ENCODE measurements at regions of chr7 and their contacts with region 1.

Region 1: DNA sequence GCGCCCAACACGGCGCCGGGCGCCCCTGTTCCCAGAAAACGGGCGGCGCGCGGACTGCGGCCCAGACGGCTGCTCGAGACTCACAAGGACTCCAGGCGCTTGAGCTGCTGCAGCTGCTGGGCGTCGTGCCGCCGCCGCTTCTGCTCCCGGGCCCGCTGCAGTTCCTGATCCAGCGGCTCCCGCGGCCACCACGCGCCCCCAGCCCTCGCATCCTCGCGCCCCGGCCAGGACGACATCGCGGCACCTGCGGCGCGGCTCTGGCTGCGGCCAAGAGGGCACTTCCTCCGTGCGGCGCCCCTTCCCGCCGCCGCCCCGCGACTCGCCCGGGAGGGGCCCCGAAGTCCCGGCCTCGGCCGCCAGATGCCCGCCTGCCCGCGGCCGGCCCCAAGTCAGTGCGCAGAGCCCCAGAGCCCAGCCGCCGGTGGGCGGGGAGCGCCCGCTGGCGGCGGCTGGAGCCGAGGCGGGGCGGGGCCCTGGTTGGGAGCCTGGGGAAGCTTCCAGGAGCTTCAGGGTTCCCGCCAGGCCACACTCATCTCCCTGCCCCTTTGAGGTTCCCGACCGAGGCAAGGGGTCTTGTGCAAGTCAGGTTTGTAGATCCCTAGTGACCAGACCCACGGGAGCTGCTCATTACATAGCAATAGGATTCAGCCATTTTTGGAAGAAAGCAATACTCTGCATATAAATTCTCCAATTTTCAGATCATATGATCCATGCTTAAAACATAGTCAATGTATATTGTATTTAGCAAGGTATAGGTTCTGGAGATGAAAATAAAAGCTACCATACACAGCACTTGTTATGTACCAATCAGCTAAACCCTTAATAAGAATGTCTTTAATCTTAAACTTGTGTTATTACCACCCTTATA is 14.2 kb upstream of the FKBP9 start:
- DNase-seq: peak; percentile 75 to 85
- ATAC-seq: peak; percentile 93 to 97 (median 96)
- H3K4me3 ChIP-seq: peak overlapping the region; percentile 40 to 99 (median 87)
- H3K27ac ChIP-seq: peak overlapping the region; percentile 76 to 99 (median 98)
- H3K4me1 ChIP-seq: peaks cover 0 to 43% (median 30%) of the 10 kb centered on the region in 9 donors
- H3K27me3 ChIP-seq: no peaks in the 10 kb centered on the region
- CTCF ChIP-seq: peak; percentile 59 to 87 (median 73)

Region 2: DNA sequence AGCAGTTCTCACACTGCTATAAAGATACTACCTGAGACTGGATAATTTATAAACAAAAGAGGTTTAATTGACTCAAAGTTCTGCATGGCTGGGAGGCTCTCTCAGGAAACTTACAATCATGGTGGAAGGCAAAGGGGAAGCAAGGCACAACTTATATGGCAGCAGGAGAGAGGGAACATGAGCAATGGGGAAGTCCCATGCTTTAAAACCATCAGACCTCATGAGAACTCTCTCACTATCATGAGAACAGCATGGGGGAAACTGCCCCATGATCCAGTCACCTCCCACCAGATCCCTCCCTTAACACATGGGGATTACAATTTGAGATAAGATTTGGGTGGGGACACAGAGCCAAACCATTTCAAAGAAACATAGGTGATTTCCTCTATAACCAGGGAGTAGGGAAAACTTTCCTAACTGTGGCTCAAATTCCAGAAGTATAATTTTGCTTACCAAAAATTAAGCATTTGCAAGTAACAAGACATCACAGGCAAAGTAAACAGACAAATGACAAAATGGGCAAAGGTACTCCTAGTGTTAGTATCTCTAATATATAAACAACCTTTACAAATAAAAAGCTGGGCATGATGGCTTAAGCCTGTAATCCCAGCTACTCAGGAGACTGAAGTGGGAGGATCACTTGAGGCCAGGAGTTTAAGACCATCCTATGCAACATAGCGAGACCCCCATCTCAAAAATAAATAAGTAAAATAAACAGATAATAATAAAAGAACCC is 139.4 kb before region 1 on chr7:
- intact Hi-C with region 1: loop called in 4 of 10 experiments (anchors 5 to 10 kb)
- DNase-seq: no peak
- ATAC-seq: no peak
- H3K4me3 ChIP-seq: no peak overlapping the region
- H3K27ac ChIP-seq: no peak overlapping the region
- H3K4me1 ChIP-seq: peaks cover 0 to 3% (median 0%) of the 10 kb centered on the region in 9 donors
- H3K27me3 ChIP-seq: no peaks in the 10 kb centered on the region
- CTCF ChIP-seq: no peak

Region 3: GRCh38 chr7:32846701-32847100 is 96.3 kb before region 1 on chr7:
- intact Hi-C with region 1: loop called in 5 of 10 experiments (anchors 1 to 10 kb)
- DNase-seq: peak; percentile 81 to 91
- ATAC-seq: peak; percentile 96 to 100 (median 98)
- H3K4me3 ChIP-seq: peak overlapping the region in 4 of 10 donors; percentile 3 to 16 (median 10)
- H3K27ac ChIP-seq: no peak overlapping the region
- H3K4me1 ChIP-seq: peaks cover 0 to 10% (median 3%) of the 10 kb centered on the region in 9 donors
- H3K27me3 ChIP-seq: no peaks in the 10 kb centered on the region
- CTCF ChIP-seq: peak; percentile 57 to 96 (median 94)

Region 4: DNA sequence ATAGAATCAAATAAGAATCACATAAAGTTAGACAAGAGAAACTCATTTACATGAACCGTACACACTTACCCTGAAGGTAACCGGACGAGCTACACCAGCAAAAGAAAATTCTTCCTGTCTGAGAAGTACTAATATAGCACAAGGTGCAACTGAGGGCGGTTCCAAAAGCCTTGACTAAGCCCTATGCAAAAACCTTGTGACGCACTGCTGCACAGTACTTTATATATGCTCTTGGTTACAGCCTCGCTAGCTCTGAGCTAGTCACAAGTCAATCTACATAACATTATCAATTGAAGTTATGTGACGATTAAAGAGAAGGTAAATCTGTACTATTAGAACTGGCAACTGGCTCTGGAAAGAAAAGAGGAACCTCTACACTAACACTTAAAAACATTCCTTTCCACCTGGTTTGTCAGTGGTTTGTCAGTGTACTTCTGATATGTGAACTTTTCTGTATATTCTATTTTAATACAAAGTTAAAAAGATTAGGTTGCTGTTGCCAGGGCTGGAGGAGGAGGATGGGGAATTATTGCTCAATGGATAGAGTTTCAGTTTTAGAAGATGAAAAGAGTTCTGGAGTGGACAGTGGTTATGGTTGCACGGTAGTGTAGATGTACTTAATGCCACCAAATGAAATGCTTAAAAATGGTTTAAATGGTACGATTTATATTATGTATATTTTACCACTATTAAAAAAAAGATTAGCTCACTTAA is 97.9 kb after region 1 on chr7:
- intact Hi-C with region 1: loop called in 2 of 10 experiments (anchors 10 kb)
- DNase-seq: no peak
- ATAC-seq: peak in 6 of 8 donors; percentile 71 to 84 (median 82)
- H3K4me3 ChIP-seq: peak overlapping the region in 9 of 10 donors; percentile 2 to 67 (median 52)
- H3K27ac ChIP-seq: peak overlapping the region in 8 of 10 donors; percentile 19 to 87 (median 70)
- H3K4me1 ChIP-seq: peaks cover 5 to 72% (median 62%) of the 10 kb centered on the region in 9 donors
- H3K27me3 ChIP-seq: no peaks in the 10 kb centered on the region
- CTCF ChIP-seq: no peak

Region 5: GRCh38 chr7:33072471-33072870 is 129.5 kb after region 1 on chr7:
- intact Hi-C with region 1: no loop called
- DNase-seq: peak in 1 of 2 donors; percentile 50
- ATAC-seq: peak; percentile 67 to 95 (median 81)
- H3K4me3 ChIP-seq: no peak overlapping the region
- H3K27ac ChIP-seq: peak overlapping the region in 6 of 10 donors; percentile 42 to 79 (median 71)
- H3K4me1 ChIP-seq: peaks cover 0 to 20% (median 0%) of the 10 kb centered on the region in 9 donors
- H3K27me3 ChIP-seq: no peaks in the 10 kb centered on the region
- CTCF ChIP-seq: no peak